Breast epithelium (tissue), 4 donors: ENCODE measurements at regions of chr5 and their contacts with region 1.

Region 1: DNA sequence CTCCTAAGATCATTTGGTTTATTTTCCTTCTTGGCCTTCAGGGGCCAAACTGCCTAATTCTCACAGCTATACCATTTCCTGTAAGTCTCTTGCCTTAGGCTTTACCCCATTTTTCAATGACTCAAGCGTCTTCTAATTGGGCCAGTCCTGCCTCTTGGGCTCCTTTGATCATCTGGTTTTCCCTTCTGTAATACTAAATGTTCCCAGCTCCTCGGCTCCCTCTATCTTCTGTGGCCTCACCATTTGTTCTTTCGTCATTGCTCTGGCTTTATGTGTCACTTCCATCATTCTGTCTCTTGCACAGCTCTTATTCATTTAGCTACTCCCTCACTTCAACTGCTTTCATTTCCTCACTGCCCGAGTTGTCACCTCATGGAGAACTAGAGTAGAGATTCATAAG is 14.5 kb upstream of the SPINK7 start:
- DNase-seq: no peak
- H3K4me3 ChIP-seq: no peak overlapping the region
- H3K27ac ChIP-seq: no peak overlapping the region
- H3K4me1 ChIP-seq: no peaks in the 10 kb centered on the region
- H3K27me3 ChIP-seq: no peaks in the 10 kb centered on the region
- CTCF ChIP-seq: no peak
- POLR2A ChIP-seq: no peak

Region 2: GRCh38 chr5:148309746-148310145 is 12.0 kb after region 1 on chr5:
- intact Hi-C with region 1: loop called (anchors 1 kb)
- DNase-seq: no peak
- H3K4me3 ChIP-seq: no peak overlapping the region
- H3K27ac ChIP-seq: no peak overlapping the region
- H3K4me1 ChIP-seq: no peaks in the 10 kb centered on the region
- H3K27me3 ChIP-seq: no peaks in the 10 kb centered on the region
- CTCF ChIP-seq: no peak
- POLR2A ChIP-seq: no peak